ENCODE measurements at regions of chr14 and their contacts with region 1.

Region 1: DNA sequence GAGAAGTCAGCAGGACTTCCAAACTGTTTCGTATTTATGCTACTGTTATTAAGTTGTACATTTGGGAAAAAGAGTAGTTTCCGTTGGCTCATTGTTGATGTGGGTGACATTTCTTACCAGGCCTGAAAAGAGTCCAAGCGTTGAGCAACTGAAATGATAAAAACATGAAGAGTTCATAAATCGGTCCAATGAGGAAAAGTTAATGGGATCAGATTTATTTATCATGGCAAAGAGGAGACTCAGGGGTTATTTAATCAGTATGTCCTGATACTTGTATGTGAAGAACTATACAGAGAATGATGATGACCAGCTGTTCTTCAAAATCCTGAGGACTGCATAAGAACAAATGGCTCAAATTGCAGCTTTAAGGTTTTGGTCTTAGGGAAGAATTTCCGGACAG is 7.7 kb downstream of the VRK1 start:
- DNase-seq: no peak

Region 2: DNA sequence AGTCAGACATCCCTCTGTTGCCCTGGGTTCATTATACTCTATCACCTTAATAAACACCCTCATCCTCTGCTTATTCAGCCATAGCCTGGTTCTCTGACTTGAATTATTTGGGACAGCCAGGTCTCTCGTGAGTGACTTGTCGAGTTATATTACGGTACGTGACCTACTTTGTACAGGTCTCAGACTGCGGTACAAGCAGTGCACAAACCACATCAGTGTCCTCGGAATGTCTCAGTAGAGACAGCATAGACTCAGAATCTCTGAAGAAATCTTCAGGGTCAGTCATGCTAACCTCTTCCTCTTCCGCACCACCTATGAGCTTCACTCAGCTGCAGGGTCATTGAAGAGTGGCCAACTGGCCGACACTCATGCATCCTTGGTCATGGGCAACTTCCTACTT is 1606.3 kb after region 1 on chr14:
- intact Hi-C with region 1: loop called in 1 of 2 experiments (anchors 5 kb)
- DNase-seq: no peak

Region 3: GRCh38 chr14:98573082-98573481 is 1768.2 kb after region 1 on chr14:
- intact Hi-C with region 1: no loop called
- DNase-seq: no peak

Measured in posterior vena cava (tissue), 2 donors.